ENCODE measurements at regions of chr1 and their contacts with region 1.

Region 1: DNA sequence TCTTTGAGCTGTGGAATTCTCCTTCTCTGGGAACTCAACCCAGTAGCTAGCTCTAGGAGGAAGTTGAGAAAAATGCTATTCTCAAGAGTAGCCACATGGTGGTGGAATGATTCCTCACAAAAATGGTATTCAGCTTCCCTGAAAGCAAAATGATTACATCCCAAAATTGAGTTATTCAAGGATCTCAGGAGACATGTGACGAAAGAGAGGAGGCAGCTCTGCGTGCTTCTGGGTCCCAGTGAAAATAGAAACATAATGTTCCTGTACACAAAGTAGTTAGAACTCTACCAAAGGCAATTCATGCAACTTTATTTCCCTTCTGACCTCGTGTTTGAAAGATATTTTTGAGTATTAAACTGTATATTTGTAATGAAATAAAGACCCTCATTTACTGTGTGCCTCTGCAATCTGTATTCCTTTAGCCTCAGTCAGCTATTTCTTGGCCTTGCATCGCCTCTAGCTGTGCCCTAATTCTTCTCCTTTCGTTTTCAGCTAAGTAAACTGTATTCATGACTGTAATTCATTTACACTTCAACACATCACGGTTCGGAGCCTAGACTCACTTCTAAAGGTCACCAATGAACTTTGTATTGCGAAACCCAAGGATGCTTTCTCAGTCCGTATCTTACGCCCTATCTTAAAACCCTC is 167.3 kb downstream of the FASLG start:
- DNase-seq: no peak
- ATAC-seq: peak; percentile 55
- H3K4me3 Mint-ChIP-seq: no peak overlapping the region
- H3K27ac Mint-ChIP-seq: no peak overlapping the region
- H3K4me1 Mint-ChIP-seq: peaks cover 26% of the 10 kb centered on the region
- H3K27me3 Mint-ChIP-seq: no peaks in the 10 kb centered on the region

Region 2: GRCh38 chr1:172778456-172779455 is 47.5 kb before region 1 on chr1:
- CTCF ChIA-PET with region 1: interaction called, 40 read pairs
- POLR2A ChIA-PET with region 1: no interaction called
- DNase-seq: peak; percentile 32
- ATAC-seq: peak; percentile 73
- H3K4me3 Mint-ChIP-seq: peak overlapping the region; percentile 16
- H3K27ac Mint-ChIP-seq: peak overlapping the region; percentile 17
- H3K4me1 Mint-ChIP-seq: peaks cover 31% of the 10 kb centered on the region
- H3K27me3 Mint-ChIP-seq: no peaks in the 10 kb centered on the region

Region 3: DNA sequence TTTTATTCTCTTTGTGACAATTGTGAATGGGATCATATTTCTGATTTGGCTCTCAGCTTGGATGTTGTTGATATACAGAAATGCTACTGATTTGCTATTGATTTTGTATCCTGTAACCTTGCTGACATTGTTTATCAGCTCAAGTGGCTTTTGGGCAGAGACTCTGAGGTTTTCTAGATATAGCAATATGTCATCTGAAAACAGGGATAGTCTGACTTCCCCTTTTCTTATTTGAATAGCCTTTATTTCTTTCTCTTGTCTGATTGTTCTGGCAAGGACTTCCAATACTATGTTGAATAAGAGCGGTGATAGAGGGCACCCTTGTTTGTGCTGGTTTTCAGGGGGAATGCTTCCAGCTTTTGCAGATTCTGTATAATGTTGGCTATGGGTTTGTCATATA is 16.5 kb before region 1 on chr1:
- CTCF ChIA-PET with region 1: no interaction called
- POLR2A ChIA-PET with region 1: no interaction called
- DNase-seq: no peak
- ATAC-seq: no peak
- H3K4me3 Mint-ChIP-seq: no peak overlapping the region
- H3K27ac Mint-ChIP-seq: no peak overlapping the region
- H3K4me1 Mint-ChIP-seq: peaks cover 17% of the 10 kb centered on the region
- H3K27me3 Mint-ChIP-seq: no peaks in the 10 kb centered on the region

Region 4: DNA sequence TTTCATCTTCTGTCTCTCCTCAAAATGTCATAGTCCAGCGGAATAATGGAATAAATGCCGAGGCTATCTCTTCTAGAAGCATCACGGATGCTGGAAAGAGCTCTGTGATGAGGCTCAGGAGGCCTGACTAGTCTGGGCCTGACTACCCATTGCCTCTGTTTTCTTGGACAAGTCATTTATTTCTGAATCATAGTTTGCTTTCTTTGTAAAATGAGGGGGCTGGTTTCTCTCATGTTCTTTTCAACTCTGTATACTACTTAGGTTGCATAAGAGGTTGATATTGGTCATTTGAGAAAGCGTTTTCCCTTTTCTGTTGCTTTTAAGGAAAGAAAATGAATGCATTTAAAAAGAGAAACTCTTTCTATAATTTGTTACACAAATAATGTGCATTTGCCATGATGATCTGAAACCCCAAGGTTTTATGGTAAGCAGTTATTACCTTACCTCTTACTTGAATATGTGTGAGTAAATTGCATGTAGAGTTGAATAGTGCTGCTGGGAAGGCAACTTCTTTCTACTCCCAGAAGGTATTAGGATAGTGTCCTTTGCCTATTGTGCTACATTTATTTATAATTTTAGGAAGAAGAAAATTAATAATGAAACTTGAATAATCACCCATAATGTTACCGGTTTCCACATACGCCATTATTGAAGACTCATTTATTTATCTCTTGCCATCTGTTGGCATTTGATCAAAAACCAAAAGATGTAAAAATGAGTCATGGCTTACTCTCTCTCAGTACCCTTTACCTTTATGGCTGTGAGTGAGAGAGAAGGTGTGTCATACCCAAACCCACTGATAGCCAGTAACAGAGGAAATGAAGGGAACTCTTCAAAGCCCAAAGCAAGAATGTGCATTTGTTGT is 11.8 kb after region 1 on chr1:
- CTCF ChIA-PET with region 1: interaction called, 27 read pairs
- POLR2A ChIA-PET with region 1: no interaction called
- DNase-seq: peak; percentile 52
- ATAC-seq: peak; percentile 99
- H3K4me3 Mint-ChIP-seq: peak overlapping the region; percentile 44
- H3K27ac Mint-ChIP-seq: peak overlapping the region; percentile 39
- H3K4me1 Mint-ChIP-seq: peaks cover 52% of the 10 kb centered on the region
- H3K27me3 Mint-ChIP-seq: peaks cover 13% of the 10 kb centered on the region

Region 5: GRCh38 chr1:172895050-172895460 is 68.8 kb after region 1 on chr1:
- CTCF ChIA-PET with region 1: interaction called, 18 read pairs
- POLR2A ChIA-PET with region 1: interaction called, 3 read pairs
- DNase-seq: peak; percentile 62
- ATAC-seq: peak; percentile 91
- H3K4me3 Mint-ChIP-seq: peak overlapping the region; percentile 70
- H3K27ac Mint-ChIP-seq: peak overlapping the region; percentile 93
- H3K4me1 Mint-ChIP-seq: peaks cover 49% of the 10 kb centered on the region
- H3K27me3 Mint-ChIP-seq: peaks cover 1% of the 10 kb centered on the region

Region 6: DNA sequence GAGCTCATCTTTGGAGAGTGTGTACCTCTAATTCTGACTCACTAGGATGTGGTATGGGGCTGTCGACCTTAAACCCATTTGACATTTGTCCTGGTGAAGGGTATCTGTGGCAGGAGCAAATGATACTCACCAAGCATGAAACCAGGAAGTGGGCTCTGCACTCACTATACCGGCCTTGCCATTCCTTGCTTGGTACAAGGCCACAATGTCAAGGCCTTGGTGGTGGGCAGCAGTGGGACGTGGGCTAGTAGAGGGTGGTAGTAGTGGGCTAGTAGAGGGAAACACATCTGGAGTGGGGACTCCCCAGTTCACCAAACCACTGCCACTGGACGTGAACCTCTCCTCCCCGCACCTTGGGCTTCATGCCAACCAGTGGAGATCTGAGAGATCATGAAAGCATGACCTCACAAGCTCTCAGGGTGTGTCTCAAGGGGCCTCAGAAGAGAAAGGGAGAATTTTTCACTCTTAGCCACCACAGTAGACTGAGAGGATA is 369.4 kb after region 1 on chr1:
- CTCF ChIA-PET with region 1: interaction called, 10 read pairs
- POLR2A ChIA-PET with region 1: no interaction called
- DNase-seq: peak; percentile 64
- ATAC-seq: peak; percentile 77
- H3K4me3 Mint-ChIP-seq: no peak overlapping the region
- H3K27ac Mint-ChIP-seq: peak overlapping the region; percentile 74
- H3K4me1 Mint-ChIP-seq: peaks cover 34% of the 10 kb centered on the region
- H3K27me3 Mint-ChIP-seq: no peaks in the 10 kb centered on the region

Region 7: DNA sequence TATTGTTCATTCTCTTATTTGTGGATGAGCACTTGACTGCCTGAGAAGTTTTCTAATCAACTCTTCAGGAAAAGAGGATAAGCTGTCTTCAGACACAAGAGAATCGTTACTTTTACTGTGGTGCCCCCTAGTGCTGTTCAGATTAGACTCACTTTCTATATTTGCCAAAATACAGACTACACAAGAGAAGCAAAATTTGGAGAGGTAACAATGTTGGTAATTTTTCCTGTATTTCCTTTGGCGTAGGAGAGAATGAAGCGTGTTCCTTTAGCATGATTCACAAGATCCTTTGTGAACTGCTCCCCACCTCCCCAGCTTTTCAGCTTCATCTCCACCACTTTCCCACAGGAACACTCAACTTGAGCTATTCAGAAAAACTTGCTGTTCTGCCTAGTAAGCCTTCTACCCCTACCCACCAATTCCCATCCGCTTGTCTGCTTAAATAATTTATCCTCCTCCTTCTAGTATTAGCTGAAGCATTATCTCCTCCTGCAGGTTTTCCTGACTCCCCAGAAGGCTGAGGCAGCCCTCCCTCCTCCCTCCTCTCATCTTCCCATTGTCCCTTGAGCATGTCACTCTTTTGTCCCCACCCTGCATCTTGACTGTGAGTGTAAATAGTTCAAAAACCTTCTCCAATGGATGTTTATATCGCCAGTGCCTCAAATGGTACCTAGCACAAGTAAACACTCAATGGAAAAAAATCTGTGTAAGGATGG is 376.4 kb after region 1 on chr1:
- CTCF ChIA-PET with region 1: interaction called, 108 read pairs
- POLR2A ChIA-PET with region 1: interaction called, 3 read pairs
- DNase-seq: peak; percentile 52
- ATAC-seq: no peak
- H3K4me3 Mint-ChIP-seq: no peak overlapping the region
- H3K27ac Mint-ChIP-seq: no peak overlapping the region
- H3K4me1 Mint-ChIP-seq: peaks cover 50% of the 10 kb centered on the region
- H3K27me3 Mint-ChIP-seq: peaks cover 2% of the 10 kb centered on the region

Measured in activated CD8-positive, alpha-beta T cell treated with anti-CD3 and anti-CD28 coated beads, Interleukin-2, amount 10 ng/mL, durations not matched to agents 7 days and 5 days (primary cell).